ENCODE measurements at regions of chr11 and their contacts with region 1.

Region 1: DNA sequence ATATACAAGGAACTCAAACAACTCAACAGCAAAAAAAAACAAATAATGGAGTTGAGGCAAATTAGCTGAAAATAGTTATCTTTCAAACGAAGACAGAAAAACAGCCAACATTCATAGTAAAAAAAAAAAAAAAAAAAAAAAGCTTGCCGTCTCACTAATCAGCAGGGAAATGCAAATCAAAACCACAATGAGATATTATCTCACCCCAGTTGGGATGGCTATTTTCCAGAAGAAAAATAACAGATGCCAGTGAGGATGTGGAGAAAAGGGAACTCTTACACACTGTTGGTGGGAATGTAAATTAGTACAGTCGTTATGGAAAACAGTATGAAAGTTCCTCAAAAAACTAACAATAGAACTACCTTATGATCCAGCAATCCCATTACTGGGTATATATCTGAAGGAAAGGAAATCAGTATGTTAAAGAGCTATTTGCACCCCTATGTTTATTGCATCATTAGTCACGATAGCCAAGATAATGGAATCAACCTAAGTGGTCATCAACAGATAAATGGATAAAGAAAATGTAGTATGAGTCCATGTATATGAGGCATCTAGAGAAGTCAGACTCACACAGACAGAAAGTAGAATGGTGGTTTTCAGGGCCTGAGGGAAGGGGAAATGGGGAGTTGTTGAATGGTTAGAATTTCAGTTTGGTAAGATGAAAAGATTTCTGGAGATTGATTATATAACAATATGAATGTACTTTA is 56.0 kb downstream of the USP35 start:
- DNase-seq: no peak
- ATAC-seq: no peak

Region 2: DNA sequence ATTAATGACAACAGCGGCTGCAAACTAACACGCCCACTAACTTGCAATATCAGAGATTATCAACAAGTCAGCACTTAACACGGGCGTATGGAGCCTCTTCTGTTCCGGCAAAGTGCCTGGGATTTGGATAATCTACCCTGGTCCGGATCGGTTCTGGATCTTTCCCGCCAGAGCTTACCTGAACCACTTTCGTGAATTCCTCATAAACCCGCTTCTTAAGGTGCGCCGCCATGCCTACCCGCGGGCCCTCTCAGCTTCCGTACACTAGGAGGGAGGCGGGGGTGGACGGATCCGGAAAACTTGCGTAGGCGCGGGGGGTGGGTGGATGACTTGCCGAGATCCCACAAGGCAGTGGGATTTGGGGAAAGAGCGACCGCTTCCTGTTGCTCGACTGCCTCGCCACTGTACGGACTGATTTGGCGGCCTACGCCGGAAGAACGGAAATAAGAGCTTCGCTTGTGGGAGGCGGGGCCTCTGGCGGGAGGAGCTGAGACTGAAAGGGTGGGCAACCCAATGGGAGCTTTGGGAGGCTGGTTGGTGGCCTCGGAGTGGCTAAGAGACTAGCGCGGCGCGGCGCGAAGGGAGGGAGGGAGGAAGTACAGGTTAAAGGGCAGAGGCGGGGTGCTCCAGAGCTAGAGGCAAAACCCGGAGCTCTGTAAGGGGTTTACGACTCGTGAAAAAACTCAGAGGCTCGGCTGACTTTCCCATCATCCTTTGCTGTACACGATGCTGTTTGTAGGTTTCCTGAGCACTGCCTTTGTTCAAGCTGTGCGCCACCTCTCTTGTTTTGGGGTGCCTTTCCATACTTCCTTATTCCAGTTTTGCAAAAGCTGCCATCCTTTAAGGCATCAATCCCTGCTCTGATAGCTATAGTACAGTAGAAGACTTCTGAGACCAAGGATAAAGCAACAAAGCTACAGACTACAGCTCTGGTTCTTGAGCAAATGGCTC is 250.0 kb before region 1 on chr11 and contains the start of gene INTS4:
- intact Hi-C with region 1: no loop called
- DNase-seq: peak; percentile 98 to 100
- ATAC-seq: peak; percentile 98
- total RNA-seq, gene INTS4: 23.2 to 23.4 TPM

Region 3: DNA sequence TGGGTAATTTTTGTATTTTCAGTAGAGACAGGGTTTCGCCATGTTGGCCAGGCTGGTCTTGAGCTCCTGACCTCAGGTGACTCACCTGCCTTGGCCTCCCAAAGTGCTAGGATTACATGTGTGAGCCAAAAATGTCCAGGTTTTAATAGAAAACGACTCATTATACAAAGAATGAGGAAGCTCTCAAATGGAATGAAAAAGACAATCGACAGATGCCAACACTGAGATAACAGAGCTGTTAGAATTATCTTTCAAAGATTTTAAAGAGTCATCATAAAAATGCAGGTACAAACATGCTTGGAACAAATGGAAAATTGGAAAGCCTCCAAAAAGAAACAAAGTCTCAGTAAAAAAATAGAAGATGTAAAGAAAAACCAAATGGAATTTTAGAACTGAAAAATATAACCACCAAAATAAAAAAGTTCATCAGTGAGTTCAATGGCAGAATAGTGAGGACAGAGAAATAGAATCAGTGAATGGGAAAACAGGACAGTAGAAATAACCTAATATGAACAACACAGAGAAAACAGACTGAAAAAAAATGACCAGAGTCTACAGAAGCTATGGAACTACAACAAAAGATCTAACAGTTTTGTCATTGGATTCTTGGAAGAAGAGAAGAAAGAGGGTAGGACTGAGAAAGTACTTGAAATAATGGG is 162.0 kb after region 1 on chr11:
- intact Hi-C with region 1: loop called in 1 of 2 experiments (anchors 10 kb)
- DNase-seq: no peak
- ATAC-seq: no peak

Measured in left colon (tissue), 2 donors.